HCT116 (cell line): ENCODE measurements at regions of chr1 and their contacts with region 1.

Region 1: DNA sequence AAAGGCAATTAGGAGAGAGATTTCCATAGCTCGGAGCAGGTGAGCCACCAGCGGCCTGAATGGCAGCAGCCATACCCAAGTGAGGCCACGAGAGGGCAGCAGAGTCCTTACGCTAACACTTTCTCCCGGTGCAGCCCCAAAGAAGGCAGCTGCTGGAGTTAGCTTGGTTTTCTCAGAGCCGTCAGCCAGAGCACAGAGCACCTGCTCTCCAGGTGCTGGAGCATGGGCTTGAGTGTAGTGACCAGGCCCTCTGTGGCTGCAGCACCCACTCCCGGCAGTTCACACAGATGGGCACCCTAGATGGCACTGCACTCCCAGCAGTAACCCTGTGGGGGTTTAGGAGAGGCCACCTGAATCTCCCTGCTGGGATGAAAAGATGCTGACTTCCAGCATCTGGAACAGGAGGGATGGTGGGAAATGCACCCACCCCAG is 45.8 kb downstream of the TMCC2 start:
- DNase-seq: peak; percentile 48
- ATAC-seq: peak; percentile 79
- H3K4me3 ChIP-seq: no peak overlapping the region
- H3K27ac ChIP-seq: no peak overlapping the region
- H3K4me1 ChIP-seq: peaks cover 17 to 34% of the 10 kb centered on the region in 2 experiments
- H3K27me3 ChIP-seq: no peaks in the 10 kb centered on the region
- CTCF ChIP-seq: peak; percentile 97 to 99 (median 98)
- POLR2A ChIP-seq: no peak
- RAD21 ChIP-seq: peak; percentile 100

Region 2: DNA sequence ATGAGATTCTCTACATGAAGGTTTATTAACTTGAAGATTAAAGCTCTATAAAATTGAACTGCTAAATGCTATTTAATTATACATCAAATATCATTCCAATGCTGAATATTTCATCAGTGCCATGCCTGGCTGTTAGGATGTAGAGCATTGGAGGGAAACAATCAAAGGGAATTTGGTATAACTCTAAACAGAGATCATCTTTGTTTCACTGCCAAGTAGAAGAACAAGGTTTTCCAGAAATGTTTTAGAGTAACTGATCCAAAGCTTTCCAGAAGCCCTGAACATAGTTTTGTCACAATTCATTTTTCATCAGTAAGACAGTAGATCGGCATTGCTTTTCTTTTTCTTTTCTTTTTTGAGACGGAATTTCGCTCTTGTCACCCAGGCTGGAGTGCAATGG is 56.1 kb before region 1 on chr1:
- CTCF ChIA-PET with region 1: no interaction called
- POLR2A ChIA-PET with region 1: no interaction called
- RAD21 ChIA-PET with region 1: no interaction called
- intact Hi-C with region 1: no loop called
- DNase-seq: no peak
- ATAC-seq: no peak
- H3K4me3 ChIP-seq: no peak overlapping the region
- H3K27ac ChIP-seq: no peak overlapping the region
- H3K4me1 ChIP-seq: no peaks in the 10 kb centered on the region
- H3K27me3 ChIP-seq: no peaks in the 10 kb centered on the region
- CTCF ChIP-seq: no peak
- POLR2A ChIP-seq: no peak
- RAD21 ChIP-seq: no peak

Region 3: GRCh38 chr1:205284343-205285144 is 11.0 kb after region 1 on chr1:
- CTCF ChIA-PET with region 1: interaction called, 19 read pairs
- POLR2A ChIA-PET with region 1: interaction called, 3 read pairs
- RAD21 ChIA-PET with region 1: no interaction called
- intact Hi-C with region 1: no loop called
- DNase-seq: peak; percentile 75
- ATAC-seq: peak; percentile 95
- H3K4me3 ChIP-seq: peak overlapping the region in 1 of 2 experiments; percentile 27; a peak in 2 of 4 replicates
- H3K27ac ChIP-seq: peak overlapping the region; percentile 2; the same call in 1 of the 2 replicates
- H3K4me1 ChIP-seq: peaks cover 30 to 65% of the 10 kb centered on the region in 2 experiments
- H3K27me3 ChIP-seq: no peaks in the 10 kb centered on the region
- CTCF ChIP-seq: no peak
- POLR2A ChIP-seq: no peak
- RAD21 ChIP-seq: no peak

Region 4: GRCh38 chr1:205335643-205336091 is 62.1 kb after region 1 on chr1:
- CTCF ChIA-PET with region 1: interaction called, 18 read pairs
- POLR2A ChIA-PET with region 1: no interaction called
- RAD21 ChIA-PET with region 1: interaction called in 1 of 2 experiments, 7 read pairs
- intact Hi-C with region 1: no loop called
- DNase-seq: peak; percentile 79
- ATAC-seq: peak; percentile 99
- H3K4me3 ChIP-seq: no peak overlapping the region
- H3K27ac ChIP-seq: no peak overlapping the region
- H3K4me1 ChIP-seq: peaks cover 4 to 6% of the 10 kb centered on the region in 2 experiments; a peak in 3 of 4 replicates
- H3K27me3 ChIP-seq: no peaks in the 10 kb centered on the region
- CTCF ChIP-seq: peak; percentile 99 to 100 (median 99)
- POLR2A ChIP-seq: no peak
- RAD21 ChIP-seq: peak; percentile 94

Region 5: GRCh38 chr1:205523891-205524793 is 250.6 kb after region 1 on chr1:
- CTCF ChIA-PET with region 1: interaction called, 23 read pairs
- POLR2A ChIA-PET with region 1: no interaction called
- RAD21 ChIA-PET with region 1: no interaction called
- intact Hi-C with region 1: loop called (anchors 10 kb)
- DNase-seq: peak; percentile 46
- ATAC-seq: peak; percentile 71
- H3K4me3 ChIP-seq: no peak overlapping the region
- H3K27ac ChIP-seq: no peak overlapping the region
- H3K4me1 ChIP-seq: peaks cover 0 to 11% of the 10 kb centered on the region in 2 experiments; a peak in 2 of 4 replicates
- H3K27me3 ChIP-seq: no peaks in the 10 kb centered on the region
- CTCF ChIP-seq: peak; percentile 76 to 93 (median 84)
- POLR2A ChIP-seq: no peak
- RAD21 ChIP-seq: peak; percentile 97

Region 6: GRCh38 chr1:205631727-205632373 is 358.3 kb after region 1 on chr1 and contains the start of gene ELK4:
- CTCF ChIA-PET with region 1: interaction called, 3 read pairs
- POLR2A ChIA-PET with region 1: no interaction called
- RAD21 ChIA-PET with region 1: no interaction called
- intact Hi-C with region 1: loop called (anchors 10 kb)
- DNase-seq: peak; percentile 96
- ATAC-seq: peak; percentile 87
- H3K4me3 ChIP-seq: peak within 1 kb of the TSS; percentile 65 to 88
- H3K27ac ChIP-seq: peak within 1 kb of the TSS; percentile 96
- H3K4me1 ChIP-seq: peaks cover 14 to 16% of the 10 kb centered on the region in 2 experiments; a peak in 3 of 4 replicates
- H3K27me3 ChIP-seq: no peaks in the 10 kb centered on the region
- CTCF ChIP-seq: peak; percentile 54 to 72 (median 56); a peak in 5 of 6 replicates
- POLR2A ChIP-seq: peak; percentile 64
- RAD21 ChIP-seq: peak; percentile 78
- total RNA-seq, gene ELK4: 46.2 TPM